A673 (cell line): ENCODE measurements at regions of chr3 and their contacts with region 1.

Region 1: DNA sequence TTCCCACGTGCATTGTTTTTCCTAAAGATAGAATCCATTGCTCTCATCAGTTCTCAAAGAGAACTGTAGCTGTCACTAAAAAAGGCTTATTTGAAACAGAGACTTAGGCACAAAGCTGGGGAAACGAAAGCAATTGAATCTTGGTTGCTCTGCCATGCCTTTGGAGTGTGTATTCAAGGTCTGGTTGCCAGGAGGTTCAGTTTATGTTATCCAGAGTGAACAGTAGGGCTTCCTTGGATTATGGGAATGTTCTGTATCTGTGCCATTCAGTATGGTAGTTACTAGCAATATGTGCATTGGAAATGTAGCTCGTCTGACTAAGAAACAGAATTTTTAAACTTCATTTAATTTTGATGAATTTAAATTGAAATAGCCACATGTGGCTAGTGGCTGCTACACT is 50.6 kb downstream of the CLSTN2 start:
- DNase-seq: no peak
- H3K4me3 ChIP-seq: no peak overlapping the region
- H3K27ac ChIP-seq: no peak overlapping the region
- H3K4me1 ChIP-seq: no peaks in the 10 kb centered on the region
- H3K27me3 ChIP-seq: no peaks in the 10 kb centered on the region
- CTCF ChIP-seq: no peak

Region 2: DNA sequence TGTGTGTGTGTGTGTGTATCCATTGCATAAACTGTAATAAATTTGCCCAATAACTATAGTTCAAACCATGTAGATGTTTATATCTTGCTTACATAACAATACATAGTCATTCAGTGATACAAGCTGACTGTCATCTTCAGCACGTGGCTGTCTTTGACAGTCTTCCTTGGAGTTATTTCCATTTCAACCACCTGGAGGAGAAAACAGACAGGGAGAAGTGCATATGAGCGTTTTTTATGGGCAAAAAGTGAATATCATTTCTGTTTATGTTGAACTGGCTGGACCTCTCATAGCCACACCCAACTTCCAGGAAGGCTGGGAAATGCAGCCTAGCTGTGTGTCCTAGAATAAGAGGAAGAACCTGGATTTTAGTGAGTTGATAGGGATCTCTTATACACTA is 128.1 kb before region 1 on chr3:
- CTCF ChIA-PET with region 1: no interaction called
- POLR2A ChIA-PET with region 1: no interaction called
- intact Hi-C with region 1: no loop called
- DNase-seq: no peak
- H3K4me3 ChIP-seq: no peak overlapping the region
- H3K27ac ChIP-seq: no peak overlapping the region
- H3K4me1 ChIP-seq: no peaks in the 10 kb centered on the region
- H3K27me3 ChIP-seq: no peaks in the 10 kb centered on the region
- CTCF ChIP-seq: no peak

Region 3: GRCh38 chr3:141147657-141148056 is 1162.1 kb after region 1 on chr3:
- CTCF ChIA-PET with region 1: interaction called, 13 read pairs
- POLR2A ChIA-PET with region 1: no interaction called
- intact Hi-C with region 1: no loop called
- DNase-seq: no peak
- H3K4me3 ChIP-seq: no peak overlapping the region
- H3K27ac ChIP-seq: no peak overlapping the region
- H3K4me1 ChIP-seq: no peaks in the 10 kb centered on the region
- H3K27me3 ChIP-seq: no peaks in the 10 kb centered on the region
- CTCF ChIP-seq: no peak